CD4-positive, alpha-beta T cell (primary cell): ENCODE measurements at regions of chr2 and their contacts with region 1.

Region 1: GRCh38 chr2:135473567-135473966 is 57.5 kb downstream of the ZRANB3 start:
- DNase-seq: peak in 11 of 14 experiments; percentile 1 to 56 (median 12)
- ATAC-seq: no peak
- H3K4me3 ChIP-seq: no peak overlapping the region
- H3K4me3 Mint-ChIP-seq: no peak overlapping the region
- H3K27ac ChIP-seq: no peak overlapping the region
- H3K27ac Mint-ChIP-seq: no peak overlapping the region
- H3K4me1 ChIP-seq: no peaks in the 10 kb centered on the region
- H3K4me1 Mint-ChIP-seq: no peaks in the 10 kb centered on the region
- H3K27me3 ChIP-seq: no peaks in the 10 kb centered on the region
- H3K27me3 Mint-ChIP-seq: no peaks in the 10 kb centered on the region
- CTCF ChIP-seq: peak; percentile 51

Region 2: GRCh38 chr2:135164441-135164840 is 309.1 kb before region 1 on chr2:
- CTCF ChIA-PET with region 1: no interaction called
- POLR2A ChIA-PET with region 1: no interaction called
- intact Hi-C with region 1: no loop called
- DNase-seq: no peak
- ATAC-seq: no peak
- H3K4me3 ChIP-seq: no peak overlapping the region
- H3K4me3 Mint-ChIP-seq: no peak overlapping the region
- H3K27ac ChIP-seq: no peak overlapping the region
- H3K27ac Mint-ChIP-seq: no peak overlapping the region
- H3K4me1 ChIP-seq: no peaks in the 10 kb centered on the region
- H3K4me1 Mint-ChIP-seq: no peaks in the 10 kb centered on the region
- H3K27me3 ChIP-seq: no peaks in the 10 kb centered on the region
- H3K27me3 Mint-ChIP-seq: no peaks in the 10 kb centered on the region
- CTCF ChIP-seq: no peak

Region 3: DNA sequence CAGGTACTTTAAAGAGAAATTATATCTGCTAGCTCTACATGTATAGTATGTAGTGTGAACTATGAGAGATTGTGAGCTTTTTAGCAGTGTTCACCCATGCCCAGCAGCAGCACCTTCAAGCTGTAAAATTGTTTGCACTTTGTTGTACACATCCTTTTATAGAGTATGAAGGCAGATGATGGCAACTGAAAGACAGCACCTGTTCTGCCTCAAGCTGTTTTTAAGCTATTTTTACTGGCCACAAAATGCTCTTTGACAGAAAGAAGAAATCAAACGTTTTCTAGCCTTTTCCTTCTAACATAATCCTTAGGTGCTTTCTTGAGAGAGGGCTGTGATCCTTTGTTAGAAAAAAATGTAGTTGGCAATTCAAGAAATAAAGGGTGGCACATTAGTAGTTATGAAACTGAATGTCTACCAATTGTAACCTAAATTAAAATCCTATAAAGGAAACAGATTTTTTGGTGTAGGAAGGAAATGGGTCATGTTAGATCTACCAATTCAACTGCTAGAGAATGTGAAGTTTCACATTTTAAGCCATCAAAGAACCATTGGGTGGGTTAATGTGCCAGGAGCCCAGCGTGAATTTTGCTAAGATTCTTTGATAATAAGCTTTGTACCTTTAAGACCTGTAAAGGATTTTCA is 117.2 kb after region 1 on chr2:
- CTCF ChIA-PET with region 1: no interaction called
- POLR2A ChIA-PET with region 1: no interaction called
- intact Hi-C with region 1: loop called in 1 of 2 experiments (anchors 10 kb)
- DNase-seq: peak in 2 of 14 experiments; percentile 4 to 23
- ATAC-seq: peak; percentile 61
- H3K4me3 ChIP-seq: peak overlapping the region; percentile 6
- H3K4me3 Mint-ChIP-seq: peak overlapping the region; percentile 72
- H3K27ac ChIP-seq: peak overlapping the region in 1 of 2 donors; percentile 25
- H3K27ac Mint-ChIP-seq: peak overlapping the region; percentile 88
- H3K4me1 ChIP-seq: no peaks in the 10 kb centered on the region
- H3K4me1 Mint-ChIP-seq: peaks cover 80% of the 10 kb centered on the region
- H3K27me3 ChIP-seq: no peaks in the 10 kb centered on the region
- H3K27me3 Mint-ChIP-seq: no peaks in the 10 kb centered on the region
- CTCF ChIP-seq: no peak

Region 4: DNA sequence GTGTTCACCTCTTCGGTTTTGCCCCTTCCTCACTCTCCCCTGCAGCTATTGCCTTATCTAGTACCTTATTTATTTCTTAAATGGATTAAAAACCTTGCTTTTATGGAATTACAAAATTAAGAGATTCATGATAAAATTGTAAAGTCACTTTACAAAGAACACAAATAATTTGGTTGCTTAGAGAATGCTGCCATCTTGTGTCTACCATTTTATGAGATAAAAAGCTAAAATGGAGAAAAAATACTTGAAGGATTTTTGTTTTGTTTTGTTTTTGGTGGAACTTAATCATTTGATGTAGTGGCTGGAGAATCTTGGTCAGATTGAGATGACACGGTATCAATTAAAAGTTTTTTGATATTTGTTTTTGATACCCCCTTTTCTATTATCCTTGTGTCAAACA is 127.3 kb after region 1 on chr2:
- CTCF ChIA-PET with region 1: interaction called, 6 read pairs
- POLR2A ChIA-PET with region 1: no interaction called
- intact Hi-C with region 1: loop called (anchors 2 to 10 kb)
- DNase-seq: peak in 3 of 14 experiments; percentile 18 to 29 (median 26)
- ATAC-seq: no peak
- H3K4me3 ChIP-seq: no peak overlapping the region
- H3K4me3 Mint-ChIP-seq: no peak overlapping the region
- H3K27ac ChIP-seq: no peak overlapping the region
- H3K27ac Mint-ChIP-seq: no peak overlapping the region
- H3K4me1 ChIP-seq: no peaks in the 10 kb centered on the region
- H3K4me1 Mint-ChIP-seq: peaks cover 13% of the 10 kb centered on the region
- H3K27me3 ChIP-seq: no peaks in the 10 kb centered on the region
- H3K27me3 Mint-ChIP-seq: no peaks in the 10 kb centered on the region
- CTCF ChIP-seq: peak; percentile 35

Region 5: DNA sequence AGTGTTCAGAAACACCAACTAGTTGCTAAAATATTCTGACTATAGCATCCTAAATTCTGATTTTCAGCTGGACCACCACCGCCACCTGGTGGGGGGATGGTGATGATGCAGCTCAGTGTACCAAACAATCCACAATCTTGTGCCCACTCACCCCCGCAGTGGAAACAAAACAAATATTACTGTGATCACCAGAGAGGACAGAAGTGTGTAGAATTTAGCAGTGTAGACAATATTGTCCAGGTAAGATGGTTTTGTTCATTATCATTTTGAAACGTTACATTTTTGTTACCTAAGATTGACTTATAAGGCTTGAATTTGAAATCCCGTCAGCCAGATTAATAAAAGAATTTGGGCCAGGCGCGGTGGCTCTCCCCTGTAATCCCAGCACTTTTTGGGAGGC is 236.4 kb after region 1 on chr2:
- CTCF ChIA-PET with region 1: interaction called, 15 read pairs
- POLR2A ChIA-PET with region 1: interaction called, 3 read pairs
- intact Hi-C with region 1: loop called in 1 of 2 experiments (anchors 1 kb)
- DNase-seq: peak; percentile 46 to 82 (median 68)
- ATAC-seq: peak; percentile 87
- H3K4me3 ChIP-seq: no peak overlapping the region
- H3K4me3 Mint-ChIP-seq: no peak overlapping the region
- H3K27ac ChIP-seq: no peak overlapping the region
- H3K27ac Mint-ChIP-seq: no peak overlapping the region
- H3K4me1 ChIP-seq: no peaks in the 10 kb centered on the region
- H3K4me1 Mint-ChIP-seq: no peaks in the 10 kb centered on the region
- H3K27me3 ChIP-seq: no peaks in the 10 kb centered on the region
- H3K27me3 Mint-ChIP-seq: no peaks in the 10 kb centered on the region
- CTCF ChIP-seq: peak; percentile 99